ENCODE measurements at regions of chr1 and their contacts with region 1.

Region 1: DNA sequence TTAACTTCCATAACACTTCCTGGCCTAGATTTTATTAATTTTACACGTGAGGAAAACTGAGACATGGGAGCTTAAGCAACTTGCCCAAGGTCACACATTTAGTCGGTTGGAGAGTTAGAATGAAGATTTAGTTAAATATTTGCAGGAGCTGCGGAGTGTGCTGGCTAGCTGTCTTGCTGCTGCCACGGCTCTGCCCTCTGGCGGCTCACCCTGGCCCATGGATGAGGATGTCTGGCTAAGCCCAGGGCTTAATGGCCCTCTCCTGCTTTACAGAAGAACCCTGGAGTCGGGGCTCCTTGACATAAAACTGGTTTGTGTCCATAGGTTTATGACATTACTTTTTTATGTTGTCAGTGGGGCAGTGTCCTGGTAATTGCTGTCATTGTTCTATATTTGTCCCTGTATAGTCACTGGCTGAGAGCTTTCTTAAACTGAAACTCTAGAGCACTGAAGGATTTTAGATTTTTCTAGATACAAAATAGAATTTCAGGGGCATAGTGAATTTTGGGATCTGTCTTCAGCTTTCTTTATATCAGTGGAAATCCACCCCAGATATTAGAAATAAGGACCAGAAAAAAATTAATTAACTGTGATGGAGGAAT is 88.9 kb upstream of the WLS start:
- DNase-seq: no peak
- H3K4me3 ChIP-seq: no peak overlapping the region
- H3K27me3 ChIP-seq: peaks cover 4% of the 10 kb centered on the region
- CTCF ChIP-seq: peak; percentile 82

Region 2: GRCh38 chr1:68232354-68233148 is 88.6 kb before region 1 on chr1 and contains the start of gene WLS:
- CTCF ChIA-PET with region 1: interaction called, 13 read pairs
- POLR2A ChIA-PET with region 1: no interaction called
- DNase-seq: no peak
- H3K4me3 ChIP-seq: peak within 1 kb of the TSS; percentile 78
- H3K27me3 ChIP-seq: no peaks in the 10 kb centered on the region
- CTCF ChIP-seq: peak; percentile 44
- polyA plus RNA-seq, gene WLS: 28.4 and 34.9 TPM in 2 replicates

Region 3: GRCh38 chr1:68301471-68302001 is 19.6 kb before region 1 on chr1:
- CTCF ChIA-PET with region 1: interaction called, 11 read pairs
- POLR2A ChIA-PET with region 1: no interaction called
- DNase-seq: no peak
- H3K4me3 ChIP-seq: no peak overlapping the region
- H3K27me3 ChIP-seq: peaks cover 6% of the 10 kb centered on the region; the same call in 1 of the 2 replicates
- CTCF ChIP-seq: no peak

Region 4: DNA sequence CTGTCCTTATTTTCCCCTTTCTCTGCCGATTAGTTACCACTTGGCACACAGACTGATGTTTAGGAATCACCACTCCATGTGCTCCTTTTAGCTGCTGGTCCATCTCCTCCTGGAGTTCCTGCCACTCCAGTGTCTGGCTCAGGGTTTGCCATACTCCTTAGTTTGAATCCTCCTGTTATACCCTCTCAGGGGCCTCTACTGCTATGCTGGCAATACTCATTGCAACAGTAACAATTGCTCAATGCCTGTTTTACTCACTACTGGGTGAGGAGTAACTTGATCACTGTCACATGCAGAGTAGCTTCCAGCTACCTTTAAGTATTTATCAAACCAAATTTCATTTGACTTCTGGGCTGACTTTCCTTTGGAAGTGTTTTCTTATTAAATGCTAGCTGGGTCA is 18.3 kb after region 1 on chr1:
- CTCF ChIA-PET with region 1: interaction called, 17 read pairs
- POLR2A ChIA-PET with region 1: no interaction called
- DNase-seq: no peak
- H3K4me3 ChIP-seq: no peak overlapping the region
- H3K27me3 ChIP-seq: peaks cover 6% of the 10 kb centered on the region
- CTCF ChIP-seq: no peak

Region 5: GRCh38 chr1:68346188-68346808 is 25.1 kb after region 1 on chr1:
- CTCF ChIA-PET with region 1: interaction called, 17 read pairs
- POLR2A ChIA-PET with region 1: no interaction called
- DNase-seq: no peak
- H3K4me3 ChIP-seq: no peak overlapping the region
- H3K27me3 ChIP-seq: peaks cover 6% of the 10 kb centered on the region
- CTCF ChIP-seq: peak; percentile 50

Region 6: DNA sequence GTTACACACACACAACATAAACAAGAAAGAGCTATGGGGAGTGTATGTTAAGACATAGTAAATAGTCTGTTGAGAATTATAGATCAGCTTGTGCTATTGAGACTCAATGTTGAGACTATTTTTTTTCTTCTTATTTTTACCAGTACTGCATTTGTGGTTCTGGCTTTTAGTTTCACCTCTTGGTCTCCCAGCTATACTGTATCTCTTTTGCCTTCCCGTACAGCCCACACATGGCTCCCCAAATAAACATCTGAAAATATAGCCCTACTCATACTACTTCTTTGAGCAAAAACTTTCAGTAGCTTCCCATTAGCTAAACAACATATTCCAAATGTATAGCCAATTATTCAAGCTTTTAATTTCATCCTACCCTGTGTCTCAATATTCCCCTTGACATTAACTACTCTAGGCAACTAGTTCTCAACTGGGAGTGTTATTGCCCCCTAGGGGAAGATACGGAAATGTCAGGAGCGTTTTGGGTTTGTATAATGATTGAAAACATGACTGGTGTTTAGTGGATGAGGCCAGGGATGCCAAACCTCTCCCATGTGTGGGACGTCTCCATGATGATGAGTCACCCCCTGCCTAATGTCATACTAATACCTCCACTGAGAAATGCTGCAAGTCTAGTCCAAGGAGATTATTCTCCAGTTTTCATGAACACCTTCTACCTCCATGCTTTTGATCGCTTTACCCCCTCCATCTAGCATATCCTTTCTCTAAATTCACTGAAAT is 121.8 kb after region 1 on chr1:
- CTCF ChIA-PET with region 1: no interaction called
- POLR2A ChIA-PET with region 1: no interaction called
- DNase-seq: peak; percentile 2
- H3K4me3 ChIP-seq: no peak overlapping the region
- H3K27me3 ChIP-seq: no peaks in the 10 kb centered on the region
- CTCF ChIP-seq: peak; percentile 66

Measured in BJ (cell line).